Calu3 (cell line): ENCODE measurements at regions of chr10 and their contacts with region 1.

Region 1: DNA sequence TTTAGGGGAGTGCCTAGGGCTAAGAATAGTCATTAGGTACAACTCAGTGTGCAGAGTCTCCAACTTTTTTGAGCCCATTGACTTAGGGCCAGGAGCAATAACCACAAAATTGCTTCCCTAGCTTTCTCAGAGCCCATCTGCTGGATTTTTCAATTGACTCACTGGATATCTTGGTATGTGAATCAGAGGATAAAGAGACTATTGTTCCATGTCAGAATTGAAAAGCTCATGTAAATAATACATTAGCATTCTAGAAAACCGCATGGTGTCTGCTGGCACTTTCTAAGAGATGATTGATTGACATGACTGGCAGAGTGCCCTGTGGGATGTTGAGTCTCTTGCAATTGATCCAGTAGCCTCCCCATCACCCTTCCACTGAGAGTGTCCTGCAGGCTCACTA is 246.2 kb downstream of the CCDC7 start:
- DNase-seq: peak; percentile 84
- H3K4me3 Mint-ChIP-seq: no peak overlapping the region
- H3K27ac Mint-ChIP-seq: no peak overlapping the region
- H3K4me1 Mint-ChIP-seq: peaks cover 32% of the 10 kb centered on the region
- H3K27me3 Mint-ChIP-seq: no peaks in the 10 kb centered on the region
- CTCF ChIP-seq: no peak

Region 2: DNA sequence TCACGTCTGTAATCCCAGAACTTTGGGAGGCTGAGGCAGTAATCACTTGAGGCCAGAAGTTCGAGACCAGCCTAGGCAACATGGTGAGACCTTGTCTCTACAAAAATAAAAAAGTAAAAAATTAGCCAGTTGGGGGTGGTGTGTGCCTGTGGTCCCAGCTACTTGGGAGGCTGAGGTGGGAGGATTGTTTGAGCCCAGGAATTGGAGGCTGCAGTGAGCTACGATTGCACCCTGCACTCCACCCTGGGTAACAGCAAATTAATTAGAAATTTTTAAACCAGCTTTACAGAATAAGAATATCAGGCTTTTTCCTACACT is 481.2 kb before region 1 on chr10:
- CTCF ChIA-PET with region 1: no interaction called
- intact Hi-C with region 1: no loop called
- DNase-seq: no peak
- H3K4me3 Mint-ChIP-seq: no peak overlapping the region
- H3K27ac Mint-ChIP-seq: no peak overlapping the region
- H3K4me1 Mint-ChIP-seq: peaks cover 16% of the 10 kb centered on the region
- H3K27me3 Mint-ChIP-seq: no peaks in the 10 kb centered on the region
- CTCF ChIP-seq: no peak

Region 3: DNA sequence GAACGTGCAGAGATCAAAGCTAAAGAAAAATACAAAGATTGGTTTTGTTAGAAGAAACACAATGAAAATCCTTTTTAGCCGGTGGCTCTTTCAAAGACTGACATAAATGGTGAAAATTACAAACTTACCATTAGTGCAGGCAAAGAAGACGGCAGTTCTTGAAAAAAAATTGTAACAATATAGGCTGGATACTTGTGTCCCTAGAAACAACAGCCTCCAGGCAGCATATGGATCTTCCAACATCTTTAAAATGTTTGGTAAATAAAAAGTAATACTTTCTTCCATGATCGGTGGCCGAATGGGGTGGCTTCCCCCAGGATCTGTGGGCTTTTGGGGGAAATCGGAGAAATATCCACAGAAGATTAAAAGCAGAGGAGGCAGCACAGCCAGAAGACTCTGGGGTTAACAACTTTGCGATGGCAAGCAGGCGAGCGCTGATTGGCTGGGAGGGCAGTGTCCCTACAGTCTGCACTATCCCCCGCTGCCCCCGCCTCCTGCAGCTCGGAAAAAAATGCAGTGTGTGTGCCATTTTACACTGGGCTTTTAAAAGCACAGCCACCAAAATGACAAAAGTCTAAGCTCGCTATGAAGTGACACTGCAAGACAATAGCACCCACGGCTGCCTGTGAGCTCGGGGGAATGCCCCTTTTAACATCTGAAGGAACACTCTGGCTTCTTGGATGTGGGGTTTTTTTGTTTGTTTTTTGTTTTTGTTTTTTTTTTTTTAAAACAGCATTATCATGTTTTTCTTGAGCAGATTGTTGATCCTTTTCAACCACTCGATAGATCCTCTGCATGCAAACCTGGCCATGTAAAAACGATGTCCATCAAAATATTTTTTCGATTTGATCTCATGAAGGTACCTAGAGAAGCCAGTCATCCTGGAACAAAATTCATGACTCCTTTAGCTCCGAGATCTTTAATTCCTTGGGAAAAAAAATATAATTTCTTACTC is 313.5 kb before region 1 on chr10:
- CTCF ChIA-PET with region 1: no interaction called
- intact Hi-C with region 1: loop called (anchors 10 kb)
- DNase-seq: peak; percentile 89
- H3K4me3 Mint-ChIP-seq: no peak overlapping the region
- H3K27ac Mint-ChIP-seq: no peak overlapping the region
- H3K4me1 Mint-ChIP-seq: peaks cover 15% of the 10 kb centered on the region
- H3K27me3 Mint-ChIP-seq: no peaks in the 10 kb centered on the region
- CTCF ChIP-seq: no peak

Region 4: GRCh38 chr10:32618482-32618881 is 73.7 kb before region 1 on chr10:
- CTCF ChIA-PET with region 1: no interaction called
- intact Hi-C with region 1: no loop called
- DNase-seq: no peak
- H3K4me3 Mint-ChIP-seq: no peak overlapping the region
- H3K27ac Mint-ChIP-seq: no peak overlapping the region
- H3K4me1 Mint-ChIP-seq: no peaks in the 10 kb centered on the region
- H3K27me3 Mint-ChIP-seq: no peaks in the 10 kb centered on the region
- CTCF ChIP-seq: no peak

Region 5: DNA sequence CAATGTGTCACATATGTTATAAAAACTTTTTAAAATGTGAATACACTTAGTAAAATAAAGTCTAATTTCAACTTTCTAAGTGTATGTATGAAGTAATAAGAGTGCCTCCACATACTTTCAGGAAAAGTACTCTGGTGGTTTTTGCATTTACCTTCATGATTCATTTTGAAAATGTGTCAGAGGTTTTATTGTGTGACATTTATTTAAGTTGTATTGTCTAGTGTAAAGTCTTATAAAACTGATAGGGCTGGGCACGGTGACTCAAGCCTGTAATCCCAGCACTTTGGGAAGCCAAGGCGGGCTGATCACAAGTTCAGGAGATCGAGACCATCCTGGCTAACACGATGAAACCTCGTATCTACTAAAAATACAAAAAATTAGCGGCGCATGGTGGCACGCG is 39.4 kb after region 1 on chr10:
- CTCF ChIA-PET with region 1: no interaction called
- intact Hi-C with region 1: loop called (anchors 5 kb)
- DNase-seq: no peak
- H3K4me3 Mint-ChIP-seq: no peak overlapping the region
- H3K27ac Mint-ChIP-seq: no peak overlapping the region
- H3K4me1 Mint-ChIP-seq: no peaks in the 10 kb centered on the region
- H3K27me3 Mint-ChIP-seq: no peaks in the 10 kb centered on the region
- CTCF ChIP-seq: no peak